Adrenal gland (tissue), 19 donors: ENCODE measurements at regions of chr10 and their contacts with region 1.

Region 1: GRCh38 chr10:131885391-131886161 is 15.2 kb upstream of the PPP2R2D start:
- DNase-seq: peak; percentile 70 to 89 (median 84)
- H3K4me3 ChIP-seq: no peak overlapping the region
- H3K27ac ChIP-seq: no peak overlapping the region
- H3K4me1 ChIP-seq: no peaks in the 10 kb centered on the region
- H3K27me3 ChIP-seq: no peaks in the 10 kb centered on the region
- CTCF ChIP-seq: peak; percentile 94 to 98 (median 96)
- POLR2A ChIP-seq: no peak

Region 2: DNA sequence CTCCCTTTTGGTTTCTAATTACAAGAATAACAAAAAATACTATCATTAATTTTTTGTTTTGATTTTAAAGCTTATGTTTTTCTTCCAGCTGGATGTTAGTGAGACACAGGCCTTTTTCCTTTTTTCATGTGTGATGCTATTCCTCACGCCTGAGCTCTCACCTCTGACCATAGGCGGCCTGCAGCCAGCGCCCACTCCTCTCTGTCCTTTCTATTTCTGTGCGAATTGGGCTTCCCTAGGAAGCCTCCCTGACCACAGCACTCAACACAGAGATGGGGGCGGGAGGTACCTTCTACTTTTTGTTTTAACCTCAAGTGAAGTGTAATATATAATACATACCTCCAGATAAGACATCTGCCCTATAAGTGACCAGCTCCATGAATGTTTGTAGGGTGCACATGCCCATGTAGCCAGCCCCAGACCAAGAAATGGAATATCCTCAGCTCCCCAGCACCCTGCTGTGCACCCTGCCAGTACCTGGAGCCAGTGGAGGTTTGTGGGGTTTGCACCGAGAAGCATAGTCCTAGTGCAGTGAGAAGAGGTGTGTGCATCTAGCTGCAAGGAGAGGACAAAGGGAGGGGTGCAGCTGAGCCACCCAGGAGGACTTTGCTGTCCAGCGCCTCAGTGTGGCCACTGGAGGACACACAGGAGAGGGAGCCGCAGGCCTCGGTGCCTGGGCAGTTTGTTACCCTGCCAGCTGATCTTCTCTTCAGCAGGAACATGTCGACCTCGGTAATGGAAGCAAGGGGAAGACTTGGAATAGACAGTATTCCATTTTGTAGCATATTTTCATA is 57.6 kb after region 1 on chr10:
- intact Hi-C with region 1: loop called (anchors 5 to 10 kb)
- DNase-seq: peak in 6 of 7 donors; percentile 59 to 78 (median 71)
- H3K4me3 ChIP-seq: no peak overlapping the region
- H3K27ac ChIP-seq: no peak overlapping the region
- H3K4me1 ChIP-seq: peaks cover 3 to 20% of the 10 kb centered on the region in 2 donors
- H3K27me3 ChIP-seq: no peaks in the 10 kb centered on the region
- CTCF ChIP-seq: peak in 5 of 6 experiments; percentile 50 to 69 (median 62)
- POLR2A ChIP-seq: no peak

Region 3: GRCh38 chr10:132023092-132023811 is 137.7 kb after region 1 on chr10:
- intact Hi-C with region 1: loop called (anchors 2 to 5 kb)
- DNase-seq: peak; percentile 69 to 91 (median 86)
- H3K4me3 ChIP-seq: peak overlapping the region in 1 of 4 donors; percentile 41
- H3K27ac ChIP-seq: no peak overlapping the region
- H3K4me1 ChIP-seq: peaks cover 4 to 7% of the 10 kb centered on the region in 2 donors
- H3K27me3 ChIP-seq: no peaks in the 10 kb centered on the region
- CTCF ChIP-seq: peak; percentile 80 to 95 (median 90)
- POLR2A ChIP-seq: no peak

Region 4: DNA sequence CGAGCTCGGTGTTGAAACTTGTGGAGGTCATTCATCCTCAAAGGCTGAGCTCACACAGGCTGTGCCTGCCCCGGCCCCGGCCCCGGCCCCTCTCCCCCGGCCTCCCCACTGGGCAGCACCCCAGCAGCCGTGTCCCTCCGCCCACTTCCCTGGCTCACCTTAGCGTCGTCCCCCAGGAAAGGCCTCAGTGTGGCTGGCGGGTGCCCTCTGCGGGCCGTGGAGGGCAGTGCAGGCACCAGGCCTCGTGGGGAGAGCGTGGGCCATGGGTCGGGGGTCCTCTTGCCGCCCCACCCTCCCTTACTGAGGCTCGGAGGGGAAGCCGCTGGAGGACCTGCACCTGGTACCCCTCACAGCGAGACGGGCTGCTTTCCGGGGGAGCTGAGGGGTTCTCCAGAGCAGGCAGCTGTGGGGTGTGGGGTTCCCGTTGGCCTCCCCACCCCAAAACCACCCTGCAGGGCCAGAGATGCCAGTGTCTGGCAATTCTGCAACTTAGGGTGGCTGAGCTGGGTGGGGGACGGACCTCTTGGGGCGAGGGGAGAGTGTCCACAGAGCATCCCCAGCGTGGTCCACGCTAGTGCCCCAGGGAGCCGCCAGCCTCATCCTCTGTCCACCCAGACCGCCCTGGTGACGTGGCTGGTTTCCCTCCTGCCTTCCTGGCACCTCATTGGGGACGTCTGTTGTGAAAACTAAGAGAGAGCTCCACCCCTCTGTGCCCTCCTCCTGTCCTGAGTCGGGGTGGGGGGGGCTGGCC is 257.0 kb after region 1 on chr10:
- intact Hi-C with region 1: loop called in 1 of 2 experiments (anchors 5 kb)
- DNase-seq: peak; percentile 25 to 64 (median 48)
- H3K4me3 ChIP-seq: no peak overlapping the region
- H3K27ac ChIP-seq: no peak overlapping the region
- H3K4me1 ChIP-seq: no peaks in the 10 kb centered on the region
- H3K27me3 ChIP-seq: no peaks in the 10 kb centered on the region
- CTCF ChIP-seq: peak; percentile 55 to 90 (median 79)
- POLR2A ChIP-seq: no peak

Region 5: DNA sequence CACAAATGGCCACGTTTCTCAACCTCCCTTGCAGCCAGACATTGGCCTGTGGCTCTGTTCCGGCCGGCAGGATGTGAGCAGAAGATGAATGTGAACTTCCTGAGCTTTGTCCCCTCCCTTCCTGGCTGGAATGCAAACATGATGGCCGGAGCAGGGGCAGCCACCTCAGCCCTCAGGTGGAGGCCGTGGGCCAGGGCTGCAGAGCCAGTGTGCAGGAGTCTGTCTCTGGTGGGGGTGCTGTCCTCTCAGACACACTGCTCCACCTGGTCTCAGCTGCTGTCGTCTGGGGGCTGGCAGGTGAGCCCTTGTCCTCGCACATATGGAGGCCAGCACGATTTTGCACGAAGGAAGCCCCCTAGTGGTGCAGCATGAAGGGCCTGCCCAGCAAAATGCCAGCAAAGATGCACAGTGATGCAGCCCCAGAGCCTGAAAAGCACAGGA is 486.1 kb after region 1 on chr10:
- intact Hi-C with region 1: no loop called
- DNase-seq: peak in 1 of 7 donors; percentile 2
- H3K4me3 ChIP-seq: no peak overlapping the region
- H3K27ac ChIP-seq: no peak overlapping the region
- H3K4me1 ChIP-seq: no peaks in the 10 kb centered on the region
- H3K27me3 ChIP-seq: no peaks in the 10 kb centered on the region
- CTCF ChIP-seq: no peak
- POLR2A ChIP-seq: no peak